ENCODE measurements at regions of chr13 and their contacts with region 1.

Region 1: DNA sequence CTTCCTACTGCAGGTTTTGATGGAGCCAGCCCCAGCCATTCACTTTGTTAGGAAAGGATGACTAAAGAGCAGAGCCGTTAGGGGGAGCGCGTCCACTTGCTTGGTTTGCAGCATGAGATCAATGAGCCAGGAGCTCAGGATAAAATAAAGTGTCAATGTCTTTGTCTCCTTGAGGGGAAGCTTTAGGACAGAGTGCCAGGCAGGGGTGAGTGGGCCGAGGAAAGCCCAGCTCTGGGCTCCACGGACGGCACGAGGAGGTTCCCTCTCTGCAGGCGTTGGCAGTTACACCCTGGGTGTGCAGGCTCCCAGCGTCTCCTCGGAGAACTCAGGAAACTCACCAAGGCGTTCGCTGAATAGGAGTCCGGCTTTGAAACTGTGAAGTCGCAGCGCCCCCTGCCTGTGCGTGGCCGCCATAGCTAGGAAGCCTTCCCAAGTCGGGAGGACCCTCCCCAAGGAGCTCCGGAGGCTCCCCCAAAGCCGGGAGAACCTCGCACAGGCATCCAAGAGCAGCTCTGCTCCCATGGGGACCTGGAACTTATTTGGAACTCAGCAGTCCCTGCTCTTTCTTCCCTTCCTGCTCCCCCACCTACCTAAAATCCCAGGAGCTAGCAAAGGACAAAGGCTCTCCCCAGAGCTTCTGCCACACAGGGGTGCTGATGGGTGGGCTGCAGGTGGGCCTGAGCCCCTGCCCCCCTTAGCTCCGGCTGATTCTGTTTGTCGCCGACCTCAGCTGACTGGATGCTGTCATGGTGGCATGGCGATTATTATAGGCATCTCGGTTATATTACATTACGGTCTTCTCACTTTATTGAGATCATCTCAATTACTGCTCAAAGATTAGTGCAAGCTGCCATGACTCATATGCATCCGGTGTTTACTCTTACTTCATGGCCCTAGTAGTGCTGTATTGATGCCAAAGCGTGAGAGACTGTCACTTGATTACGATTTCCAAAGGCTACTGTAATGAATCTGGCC is 34.4 kb downstream of the GSX1 start:
- DNase-seq: peak; percentile 84
- ATAC-seq: peak; percentile 86
- H3K4me3 ChIP-seq: peak overlapping the region; percentile 35 to 54
- H3K27ac ChIP-seq: 0 out of 2 replicates have a peak overlapping the region, but pooled peaks have one; percentile 27
- H3K4me1 ChIP-seq: peaks cover 4 to 20% of the 10 kb centered on the region in 2 experiments; a peak in 3 of 4 replicates
- H3K27me3 ChIP-seq: peaks cover 15% of the 10 kb centered on the region
- CTCF ChIP-seq: peak; percentile 93 to 96 (median 94)
- POLR2A ChIP-seq: no peak
- RAD21 ChIP-seq: peak; percentile 89

Region 2: GRCh38 chr13:26985285-26985878 is 841.3 kb before region 1 on chr13:
- CTCF ChIA-PET with region 1: interaction called, 7 read pairs
- POLR2A ChIA-PET with region 1: no interaction called
- RAD21 ChIA-PET with region 1: no interaction called
- intact Hi-C with region 1: loop called (anchors 5 kb)
- DNase-seq: peak; percentile 76
- ATAC-seq: peak; percentile 94
- H3K4me3 ChIP-seq: no peak overlapping the region
- H3K27ac ChIP-seq: no peak overlapping the region
- H3K4me1 ChIP-seq: peaks cover 0 to 3% of the 10 kb centered on the region in 2 experiments; a peak in 1 of 4 replicates
- H3K27me3 ChIP-seq: no peaks in the 10 kb centered on the region
- CTCF ChIP-seq: peak; percentile 68 to 87 (median 86)
- POLR2A ChIP-seq: no peak
- RAD21 ChIP-seq: peak; percentile 97

Region 3: DNA sequence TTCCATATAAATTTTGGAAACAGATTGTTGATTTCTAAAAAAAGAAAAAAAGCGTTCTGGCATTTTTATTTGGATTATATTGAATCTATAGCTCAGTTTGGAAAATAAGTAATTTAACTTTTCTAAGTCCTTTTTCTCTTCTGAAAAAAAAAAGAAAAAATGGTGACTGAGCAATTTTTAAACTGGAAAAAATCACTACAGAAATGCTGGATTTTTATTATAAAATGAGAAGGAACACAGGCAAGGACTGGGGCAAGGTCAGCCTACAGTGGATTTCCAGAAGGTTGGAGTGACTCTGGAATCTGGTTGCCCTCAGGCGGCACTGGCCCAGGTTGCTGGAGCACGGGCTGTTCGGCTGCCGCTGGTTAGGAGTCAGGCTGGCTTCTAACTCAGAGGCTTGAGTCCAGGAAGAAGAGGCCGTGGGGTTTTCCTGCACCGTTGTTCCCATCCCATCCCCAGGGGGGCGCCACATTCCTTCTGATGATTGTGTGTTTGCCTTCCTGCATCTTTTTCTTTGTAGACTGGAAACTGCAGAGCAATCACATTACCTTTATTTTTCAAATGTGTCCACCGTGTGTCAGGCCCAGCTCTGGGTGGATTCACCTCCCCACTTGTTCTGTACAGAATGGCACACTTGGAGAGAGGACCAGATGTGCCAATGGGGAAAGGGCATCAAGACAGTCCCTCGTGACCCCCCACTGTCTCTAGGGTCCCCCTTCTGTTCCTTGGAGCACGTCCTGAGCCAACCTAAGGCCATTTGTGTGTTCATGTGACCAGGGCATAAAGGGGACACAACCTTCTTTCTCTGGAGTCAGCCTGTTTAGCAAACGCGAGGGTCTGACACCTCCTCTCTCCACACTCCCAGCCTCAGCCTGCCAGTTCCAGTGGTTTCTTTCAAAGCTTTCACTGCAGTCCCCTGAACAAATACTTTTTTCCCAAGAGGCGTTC is 446.7 kb before region 1 on chr13:
- CTCF ChIA-PET with region 1: interaction called, 27 read pairs
- POLR2A ChIA-PET with region 1: interaction called, 5 read pairs
- RAD21 ChIA-PET with region 1: interaction called, 4 read pairs
- intact Hi-C with region 1: loop called (anchors 1 kb)
- DNase-seq: peak; percentile 58
- ATAC-seq: peak; percentile 49
- H3K4me3 ChIP-seq: no peak overlapping the region
- H3K27ac ChIP-seq: no peak overlapping the region
- H3K4me1 ChIP-seq: peaks cover 19 to 39% of the 10 kb centered on the region in 2 experiments; a peak in 3 of 4 replicates
- H3K27me3 ChIP-seq: no peaks in the 10 kb centered on the region
- CTCF ChIP-seq: peak; percentile 63 to 89 (median 85); a peak in 5 of 6 replicates
- POLR2A ChIP-seq: no peak
- RAD21 ChIP-seq: peak; percentile 79

Region 4: DNA sequence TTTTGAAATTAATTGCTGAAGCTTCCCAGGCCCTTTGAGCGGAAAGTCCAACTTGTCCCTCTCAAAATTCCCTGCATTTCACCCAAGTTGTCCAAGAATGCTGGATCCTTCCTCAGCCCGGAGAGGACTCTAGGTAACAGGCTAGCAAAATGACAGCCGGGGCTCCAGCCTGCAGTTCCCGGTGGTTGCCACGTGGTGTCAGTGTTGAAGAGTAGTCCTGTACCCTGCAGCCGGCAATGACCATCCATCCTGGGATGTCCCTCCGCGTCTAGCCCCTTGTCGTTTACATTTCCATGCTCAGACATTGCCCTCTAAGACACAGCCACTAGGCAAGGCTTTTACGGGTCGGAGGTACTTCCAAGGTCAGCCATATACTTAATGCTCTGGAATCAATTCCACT is 344.9 kb before region 1 on chr13:
- CTCF ChIA-PET with region 1: interaction called, 5 read pairs
- POLR2A ChIA-PET with region 1: no interaction called
- RAD21 ChIA-PET with region 1: no interaction called
- intact Hi-C with region 1: loop called (anchors 5 kb)
- DNase-seq: peak; percentile 37
- ATAC-seq: peak; percentile 95
- H3K4me3 ChIP-seq: no peak overlapping the region
- H3K27ac ChIP-seq: no peak overlapping the region
- H3K4me1 ChIP-seq: no peaks in the 10 kb centered on the region
- H3K27me3 ChIP-seq: no peaks in the 10 kb centered on the region
- CTCF ChIP-seq: peak; percentile 31 to 89 (median 89); a peak in 5 of 6 replicates
- POLR2A ChIP-seq: no peak
- RAD21 ChIP-seq: peak; percentile 52

Region 5: GRCh38 chr13:27810461-27810860 is 16.2 kb before region 1 on chr13:
- CTCF ChIA-PET with region 1: interaction called, 17 read pairs
- POLR2A ChIA-PET with region 1: no interaction called
- RAD21 ChIA-PET with region 1: no interaction called
- intact Hi-C with region 1: no loop called
- DNase-seq: no peak
- ATAC-seq: no peak
- H3K4me3 ChIP-seq: no peak overlapping the region
- H3K27ac ChIP-seq: no peak overlapping the region
- H3K4me1 ChIP-seq: peaks cover 0 to 9% of the 10 kb centered on the region in 2 experiments; a peak in 1 of 4 replicates
- H3K27me3 ChIP-seq: no peaks in the 10 kb centered on the region
- CTCF ChIP-seq: no peak
- POLR2A ChIP-seq: no peak
- RAD21 ChIP-seq: no peak

Region 6: DNA sequence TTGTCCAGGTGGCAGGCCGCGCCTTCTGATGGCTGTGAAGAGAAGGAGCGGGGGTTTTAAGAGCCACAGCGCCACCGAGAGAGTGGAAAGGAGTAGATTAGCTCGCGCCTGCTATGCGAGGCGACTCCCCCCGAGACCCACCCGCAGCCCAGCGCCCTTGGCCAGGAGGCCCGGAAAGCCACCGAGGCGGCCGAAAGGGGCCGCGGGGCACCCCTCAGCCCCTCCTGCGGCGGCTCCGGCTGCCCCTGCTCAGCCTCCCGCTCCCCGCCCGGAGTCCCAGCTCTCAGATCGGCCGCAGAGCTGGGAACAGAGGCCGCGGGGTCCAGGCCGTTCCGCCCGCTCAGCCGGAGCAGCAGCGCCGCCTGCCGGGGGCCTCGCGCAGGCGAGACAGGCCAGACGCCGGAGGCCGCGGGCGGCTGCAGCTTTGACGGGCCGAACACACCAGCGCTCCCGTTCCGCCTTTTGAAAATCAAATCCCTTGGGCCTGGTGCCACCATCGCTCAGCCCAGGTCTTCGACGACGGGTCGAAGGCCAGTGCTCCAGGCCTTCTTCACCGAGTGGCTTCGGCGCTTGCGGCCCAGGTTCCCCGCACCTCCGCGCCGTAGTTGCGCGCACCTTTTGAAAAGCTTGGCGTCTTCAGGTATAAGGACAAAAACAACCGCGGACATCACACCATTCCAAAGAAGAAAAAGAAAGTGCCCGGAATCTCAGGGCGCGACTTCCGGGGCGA is 127.2 kb after region 1 on chr13:
- CTCF ChIA-PET with region 1: interaction called, 307 read pairs
- POLR2A ChIA-PET with region 1: interaction called, 15 read pairs
- RAD21 ChIA-PET with region 1: interaction called, 21 to 31 read pairs
- intact Hi-C with region 1: loop called (anchors 1 kb)
- DNase-seq: peak; percentile 54
- ATAC-seq: peak; percentile 99
- H3K4me3 ChIP-seq: peak overlapping the region; percentile 41 to 58
- H3K27ac ChIP-seq: peak overlapping the region; percentile 56
- H3K4me1 ChIP-seq: peaks cover 9 to 15% of the 10 kb centered on the region in 2 experiments; a peak in 3 of 4 replicates
- H3K27me3 ChIP-seq: no peaks in the 10 kb centered on the region
- CTCF ChIP-seq: peak; percentile 75 to 95 (median 90)
- POLR2A ChIP-seq: no peak
- RAD21 ChIP-seq: peak; percentile 80

Region 7: GRCh38 chr13:27997904-27998522 is 171.3 kb after region 1 on chr13:
- CTCF ChIA-PET with region 1: interaction called, 14 read pairs
- POLR2A ChIA-PET with region 1: no interaction called
- RAD21 ChIA-PET with region 1: no interaction called
- intact Hi-C with region 1: no loop called
- DNase-seq: peak; percentile 70
- ATAC-seq: peak; percentile 98
- H3K4me3 ChIP-seq: no peak overlapping the region
- H3K27ac ChIP-seq: peak overlapping the region; percentile 5; the same call in 1 of the 2 replicates
- H3K4me1 ChIP-seq: peaks cover 0 to 9% of the 10 kb centered on the region in 2 experiments; a peak in 2 of 4 replicates
- H3K27me3 ChIP-seq: no peaks in the 10 kb centered on the region
- CTCF ChIP-seq: peak; percentile 67 to 89 (median 73)
- POLR2A ChIP-seq: no peak
- RAD21 ChIP-seq: peak; percentile 79